Mammary epithelial cell (primary cell): ENCODE measurements at regions of chr15 and their contacts with region 1.

Region 1: DNA sequence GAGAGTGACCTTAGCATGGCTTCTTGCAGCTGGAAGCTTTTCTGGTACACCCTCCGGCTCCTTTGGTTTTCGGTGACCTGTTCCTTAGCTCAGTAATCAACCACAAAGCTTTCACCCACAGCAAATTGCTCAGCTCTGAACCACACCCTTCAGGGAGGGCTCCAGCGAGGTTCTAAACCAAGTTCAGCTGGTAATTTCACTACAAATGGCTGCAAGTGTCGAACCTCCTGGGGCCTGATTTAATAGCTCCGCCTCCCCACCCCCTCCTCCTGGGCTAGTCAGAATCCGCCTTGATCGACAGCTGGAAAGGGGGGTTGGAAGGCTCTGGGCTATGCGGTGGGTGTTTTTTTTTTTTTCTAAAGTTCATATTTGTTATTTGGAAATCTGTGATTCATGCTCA is 150.9 kb upstream of the MCTP2 start:
- DNase-seq: peak; percentile 91
- H3K4me3 ChIP-seq: no peak overlapping the region
- H3K27ac ChIP-seq: no peak overlapping the region
- H3K4me1 ChIP-seq: no peaks in the 10 kb centered on the region
- H3K27me3 ChIP-seq: no peaks in the 10 kb centered on the region
- CTCF ChIP-seq: no peak

Region 2: DNA sequence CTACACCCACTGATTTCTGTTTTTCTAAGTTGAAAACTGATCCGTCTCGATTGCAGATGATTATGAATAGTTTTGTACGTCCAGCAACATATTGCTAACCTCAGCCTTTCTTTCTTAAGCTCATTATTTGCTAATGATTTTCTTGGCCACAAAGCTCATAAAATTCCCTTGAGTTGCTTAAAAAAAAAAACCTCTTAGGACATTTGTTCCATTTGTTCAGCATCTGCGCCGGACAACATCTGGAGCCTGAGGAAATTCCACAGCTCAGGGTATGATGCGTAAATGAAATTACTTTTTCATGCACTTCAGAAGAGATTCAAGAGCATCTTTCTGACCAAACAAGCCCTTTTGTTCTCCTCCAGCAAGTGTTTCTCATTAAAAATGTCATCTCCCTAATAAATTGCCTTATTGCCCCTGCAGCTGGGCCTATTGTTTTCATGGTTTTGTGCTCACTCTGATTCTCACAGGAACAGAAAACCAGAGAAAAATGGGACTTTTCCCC is 98.1 kb before region 1 on chr15:
- CTCF ChIA-PET with region 1: no interaction called
- dilution Hi-C with region 1: no loop called
- in situ Hi-C with region 1: no loop called
- intact Hi-C with region 1: no loop called
- DNase-seq: no peak
- H3K4me3 ChIP-seq: no peak overlapping the region
- H3K27ac ChIP-seq: no peak overlapping the region
- H3K4me1 ChIP-seq: no peaks in the 10 kb centered on the region
- H3K27me3 ChIP-seq: no peaks in the 10 kb centered on the region
- CTCF ChIP-seq: no peak

Region 3: GRCh38 chr15:94026458-94027304 is 53.7 kb before region 1 on chr15:
- CTCF ChIA-PET with region 1: no interaction called
- dilution Hi-C with region 1: no loop called
- in situ Hi-C with region 1: no loop called
- intact Hi-C with region 1: no loop called
- DNase-seq: peak; percentile 52
- H3K4me3 ChIP-seq: no peak overlapping the region
- H3K27ac ChIP-seq: no peak overlapping the region
- H3K4me1 ChIP-seq: no peaks in the 10 kb centered on the region
- H3K27me3 ChIP-seq: no peaks in the 10 kb centered on the region
- CTCF ChIP-seq: no peak

Region 4: DNA sequence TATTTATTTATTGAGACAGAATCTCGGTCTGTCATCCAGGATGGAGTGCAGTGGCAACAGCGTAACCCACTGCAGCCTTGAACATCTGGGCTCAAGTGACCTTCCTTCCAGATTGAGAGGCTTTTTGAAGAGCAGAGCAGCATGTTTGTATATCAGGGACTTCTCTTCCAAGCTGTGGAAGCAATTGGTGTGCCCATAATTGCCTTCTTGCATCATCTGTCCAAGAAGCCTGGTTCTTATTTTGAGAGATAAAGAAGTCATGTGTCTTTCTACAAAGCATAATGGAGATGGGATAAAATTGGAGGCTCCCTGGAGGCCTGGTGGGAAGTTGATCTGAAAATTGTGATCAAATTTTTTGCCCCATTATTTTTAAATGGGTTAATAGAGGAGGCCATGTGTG is 32.9 kb before region 1 on chr15:
- CTCF ChIA-PET with region 1: no interaction called
- dilution Hi-C with region 1: loop called (anchors 5 kb)
- in situ Hi-C with region 1: no loop called
- intact Hi-C with region 1: no loop called
- DNase-seq: no peak
- H3K4me3 ChIP-seq: no peak overlapping the region
- H3K27ac ChIP-seq: no peak overlapping the region
- H3K4me1 ChIP-seq: no peaks in the 10 kb centered on the region
- H3K27me3 ChIP-seq: no peaks in the 10 kb centered on the region
- CTCF ChIP-seq: no peak

Region 5: DNA sequence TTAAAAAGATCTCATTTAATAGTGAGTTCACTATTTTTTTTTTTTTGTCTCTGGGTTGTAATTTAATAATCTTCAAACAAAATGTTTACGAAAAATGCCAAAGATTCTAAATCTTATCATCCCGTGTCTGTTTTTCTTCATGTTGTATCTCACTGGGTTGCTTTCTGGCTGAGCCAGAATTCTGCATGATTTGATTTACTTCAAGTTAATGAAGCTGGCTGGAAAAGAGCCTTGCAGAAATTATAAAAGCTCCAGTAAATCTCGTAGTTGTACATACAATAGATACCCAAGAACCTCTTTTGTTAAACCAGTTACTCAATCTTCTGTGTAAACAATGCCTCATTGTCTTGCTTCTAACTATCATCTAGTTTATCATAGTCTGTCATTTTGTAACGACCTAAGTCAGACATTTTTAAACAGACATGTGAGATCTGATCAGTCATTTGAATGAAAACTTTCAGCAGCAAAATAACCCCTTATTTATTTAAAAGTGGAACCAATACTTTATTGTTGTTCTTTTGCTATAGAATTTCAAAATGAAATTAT is 399.9 kb after region 1 on chr15:
- CTCF ChIA-PET with region 1: no interaction called
- dilution Hi-C with region 1: no loop called
- in situ Hi-C with region 1: no loop called
- intact Hi-C with region 1: no loop called
- DNase-seq: peak; percentile 8
- H3K4me3 ChIP-seq: no peak overlapping the region
- H3K27ac ChIP-seq: no peak overlapping the region
- H3K4me1 ChIP-seq: no peaks in the 10 kb centered on the region
- H3K27me3 ChIP-seq: no peaks in the 10 kb centered on the region
- CTCF ChIP-seq: no peak